ENCODE measurements at regions of chr9 and their contacts with region 1.

Region 1: GRCh38 chr9:136245219-136246150 is at the start of gene QSOX2:
- DNase-seq: peak; percentile 69 to 98 (median 82)

Region 2: DNA sequence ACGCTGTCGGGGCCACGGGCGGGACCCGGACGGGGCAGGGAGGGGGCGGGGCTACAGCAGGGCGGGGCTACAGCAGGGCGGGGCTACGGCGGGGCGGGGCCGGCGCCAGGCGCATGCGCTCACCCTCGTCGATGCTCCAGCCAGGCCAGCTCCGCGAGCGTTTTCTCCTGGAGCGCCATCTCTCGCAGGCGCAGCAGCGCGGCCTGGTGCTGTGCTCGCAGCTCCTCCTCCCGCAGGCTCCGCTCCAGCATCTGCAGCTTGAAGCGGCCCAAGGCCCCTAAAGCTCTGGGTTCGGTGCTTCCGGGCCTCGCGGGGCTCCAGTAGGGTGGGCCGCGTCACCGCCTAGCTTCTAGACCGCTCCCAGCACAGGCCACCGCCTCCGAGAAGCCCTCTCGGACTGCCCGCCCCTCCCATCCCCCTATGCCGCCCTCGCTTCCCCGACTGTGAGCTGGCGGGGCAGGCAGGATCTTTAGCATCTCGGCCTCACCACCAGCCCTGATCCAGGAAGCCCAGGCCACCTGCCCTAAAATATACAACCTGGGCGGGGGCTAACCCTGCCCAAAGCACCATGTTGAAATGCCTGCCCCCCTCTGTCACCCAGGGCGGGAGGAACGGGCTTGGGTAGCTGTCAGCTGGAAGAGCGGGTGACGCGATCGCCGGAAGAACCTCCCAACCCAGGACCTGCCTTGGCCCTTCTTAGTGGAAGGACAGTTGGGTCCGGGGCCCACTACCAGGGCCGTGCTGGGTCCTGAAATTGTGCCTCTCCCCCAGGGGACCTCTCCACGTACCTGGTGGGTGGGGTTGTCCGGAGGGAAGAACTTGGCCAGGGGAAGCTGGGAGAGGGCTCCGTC is 22.0 kb after region 1 on chr9:
- intact Hi-C with region 1: loop called (anchors 1 kb)
- DNase-seq: peak; percentile 67 to 97 (median 82)